T-cell (primary cell): ENCODE measurements at regions of chr10 and their contacts with region 1.

Region 1: DNA sequence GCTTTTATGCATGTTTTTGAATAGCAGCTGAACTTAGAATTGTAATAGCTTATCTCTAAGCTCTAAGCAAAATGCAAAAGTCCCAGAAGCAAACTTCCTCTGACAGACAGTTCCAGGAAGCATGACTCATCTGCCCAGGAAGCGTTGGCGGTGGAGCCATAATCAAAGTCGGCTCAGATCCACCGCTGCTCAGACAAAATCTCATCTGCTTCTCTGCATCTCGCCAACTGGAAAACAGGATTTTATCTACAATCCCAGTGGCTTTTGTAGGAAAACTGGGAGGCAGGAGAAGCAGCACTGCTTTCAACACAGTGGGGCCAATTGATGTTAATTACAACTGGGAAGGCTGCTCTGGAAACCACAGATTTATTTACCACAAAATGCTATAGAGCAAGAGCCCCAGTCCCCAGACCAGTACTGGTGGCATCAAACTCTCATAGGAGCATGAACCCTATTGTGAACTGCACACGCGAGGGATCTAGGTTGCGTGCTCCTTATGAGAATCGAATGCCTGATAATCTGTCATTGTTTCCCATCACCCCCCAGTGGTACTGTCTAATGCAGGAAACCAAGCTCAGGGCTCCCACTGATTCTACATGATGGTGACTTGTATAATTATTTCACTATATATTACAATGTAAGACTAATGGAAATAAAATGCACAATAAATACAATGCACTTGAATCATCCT is 99.9 kb downstream of the CUBN start:
- DNase-seq: peak; percentile 39 to 87 (median 61)
- ATAC-seq: peak; percentile 71 to 81 (median 74)
- H3K4me3 ChIP-seq: peak overlapping the region; percentile 46 to 54
- H3K4me3 Mint-ChIP-seq: peak overlapping the region; percentile 71 to 75 (median 73)
- H3K27ac ChIP-seq: peak overlapping the region; percentile 91
- H3K27ac Mint-ChIP-seq: peak overlapping the region; percentile 95 to 96
- H3K4me1 ChIP-seq: peaks cover 49 to 67% of the 10 kb centered on the region in 2 experiments
- H3K4me1 Mint-ChIP-seq: peaks cover 70 to 92% (median 89%) of the 10 kb centered on the region in 3 donors
- H3K27me3 ChIP-seq: no peaks in the 10 kb centered on the region
- H3K27me3 Mint-ChIP-seq: no peaks in the 10 kb centered on the region

Region 2: DNA sequence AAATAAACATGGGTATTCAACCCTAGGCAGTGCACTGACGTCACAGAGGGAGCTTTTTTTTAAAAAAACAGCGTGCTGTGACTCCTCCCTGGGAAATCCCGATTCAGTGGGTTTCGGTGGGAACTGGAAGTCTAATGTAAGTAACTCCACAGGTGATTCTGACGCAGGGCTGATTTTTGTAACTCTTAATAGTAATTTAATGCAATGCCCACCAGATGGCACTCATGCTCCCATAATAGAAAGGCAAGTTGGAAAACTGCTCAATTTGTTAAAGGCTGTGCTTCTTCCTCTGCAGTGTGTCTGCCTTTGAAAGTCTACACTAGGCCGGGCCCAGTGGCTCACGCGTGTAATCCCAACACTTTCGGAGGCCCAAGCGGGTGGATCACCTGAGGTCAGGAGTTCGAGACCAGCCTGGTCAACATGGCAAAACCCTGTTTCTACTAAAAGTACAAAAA is 201.6 kb before region 1 on chr10:
- CTCF ChIA-PET with region 1: no interaction called
- POLR2A ChIA-PET with region 1: no interaction called
- DNase-seq: peak; percentile 6 to 88 (median 51)
- ATAC-seq: peak; percentile 81 to 92 (median 92)
- H3K4me3 ChIP-seq: no peak overlapping the region
- H3K4me3 Mint-ChIP-seq: no peak overlapping the region
- H3K27ac ChIP-seq: no peak overlapping the region
- H3K27ac Mint-ChIP-seq: peak overlapping the region; percentile 66 to 77
- H3K4me1 ChIP-seq: peaks cover 0 to 6% of the 10 kb centered on the region in 2 experiments
- H3K4me1 Mint-ChIP-seq: peaks cover 0 to 7% (median 4%) of the 10 kb centered on the region in 3 donors
- H3K27me3 ChIP-seq: no peaks in the 10 kb centered on the region
- H3K27me3 Mint-ChIP-seq: no peaks in the 10 kb centered on the region

Region 3: DNA sequence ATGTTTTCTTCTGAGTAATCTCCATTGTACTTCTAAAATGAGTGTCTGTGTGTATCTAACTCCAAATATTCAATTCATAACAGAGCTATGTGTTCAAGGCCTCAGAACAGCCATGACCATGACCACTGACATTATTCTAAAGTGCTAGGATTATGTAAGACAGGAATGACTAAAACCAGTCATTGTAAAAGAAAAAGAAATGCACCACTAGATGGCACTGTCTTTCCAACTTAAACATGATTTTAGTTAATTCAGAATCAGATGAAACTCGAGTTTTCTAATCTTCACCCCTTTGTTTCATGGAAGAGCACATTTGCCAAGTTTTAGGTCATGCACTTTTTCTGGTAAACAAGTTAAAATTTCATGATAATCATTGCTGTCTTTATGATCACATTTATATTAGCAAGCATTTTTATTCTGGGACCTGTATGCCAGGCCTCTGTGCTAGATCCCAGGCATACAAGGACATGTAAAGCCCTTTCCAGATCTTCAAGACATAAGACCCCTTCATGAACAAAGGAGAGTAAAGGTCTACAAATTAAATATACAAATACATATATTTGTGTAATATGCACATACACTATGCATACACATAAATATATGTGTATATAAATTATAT is 186.4 kb before region 1 on chr10:
- CTCF ChIA-PET with region 1: interaction called in 1 of 2 experiments, 11 read pairs
- POLR2A ChIA-PET with region 1: no interaction called
- DNase-seq: peak in 2 of 35 experiments; percentile 16 to 75
- ATAC-seq: peak; percentile 52 to 66 (median 58)
- H3K4me3 ChIP-seq: no peak overlapping the region
- H3K4me3 Mint-ChIP-seq: no peak overlapping the region
- H3K27ac ChIP-seq: no peak overlapping the region
- H3K27ac Mint-ChIP-seq: no peak overlapping the region
- H3K4me1 ChIP-seq: no peaks in the 10 kb centered on the region
- H3K4me1 Mint-ChIP-seq: peaks cover 2 to 6% (median 4%) of the 10 kb centered on the region in 3 donors
- H3K27me3 ChIP-seq: no peaks in the 10 kb centered on the region
- H3K27me3 Mint-ChIP-seq: no peaks in the 10 kb centered on the region

Region 4: DNA sequence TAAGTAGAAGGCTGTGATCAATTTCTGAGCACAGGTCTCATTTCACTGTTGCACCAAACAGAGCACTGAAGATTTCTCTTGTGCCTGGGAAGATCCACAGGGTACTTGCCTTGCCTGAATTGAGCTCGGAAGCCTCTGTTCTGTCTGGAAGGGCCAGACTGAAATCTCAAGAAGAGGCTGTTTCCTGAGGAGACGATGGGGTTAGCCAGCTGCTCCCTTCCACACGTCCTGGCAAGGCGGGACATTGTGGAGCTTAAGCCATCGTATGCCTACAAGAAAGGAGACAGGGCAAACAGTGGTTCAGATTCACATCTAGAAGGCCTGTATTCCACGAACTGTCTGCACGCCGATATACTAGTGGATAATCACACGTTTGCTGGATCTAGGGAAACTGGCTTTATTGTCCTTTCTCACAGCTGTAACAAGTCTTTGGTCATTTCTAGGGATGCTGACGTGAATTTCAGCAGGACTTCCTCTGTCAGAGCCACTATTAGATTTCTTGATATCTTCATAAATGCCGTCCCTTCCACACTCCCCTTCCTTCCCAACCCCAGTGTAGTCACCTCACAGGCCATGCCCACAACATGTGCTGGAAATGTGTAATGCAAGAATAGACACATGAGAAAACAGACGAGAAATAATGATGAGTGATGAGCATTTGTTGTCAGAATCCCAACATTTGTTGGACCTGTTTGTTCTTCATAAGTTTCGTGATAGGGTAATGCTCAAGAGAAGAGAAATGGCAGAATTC is 75.3 kb before region 1 on chr10:
- CTCF ChIA-PET with region 1: no interaction called
- POLR2A ChIA-PET with region 1: no interaction called
- DNase-seq: no peak
- ATAC-seq: no peak
- H3K4me3 ChIP-seq: no peak overlapping the region
- H3K4me3 Mint-ChIP-seq: no peak overlapping the region
- H3K27ac ChIP-seq: no peak overlapping the region
- H3K27ac Mint-ChIP-seq: no peak overlapping the region
- H3K4me1 ChIP-seq: peaks cover 0 to 5% of the 10 kb centered on the region in 2 experiments
- H3K4me1 Mint-ChIP-seq: peaks cover 12 to 24% (median 12%) of the 10 kb centered on the region in 3 donors
- H3K27me3 ChIP-seq: no peaks in the 10 kb centered on the region
- H3K27me3 Mint-ChIP-seq: no peaks in the 10 kb centered on the region

Region 5: GRCh38 chr10:17001961-17002749 is 27.6 kb before region 1 on chr10:
- CTCF ChIA-PET with region 1: interaction called in 1 of 2 experiments, 3 read pairs
- POLR2A ChIA-PET with region 1: interaction called in 1 of 2 experiments, 10 read pairs
- DNase-seq: peak in 19 of 35 experiments; percentile 10 to 87 (median 29)
- ATAC-seq: peak in 2 of 4 experiments; percentile 5 to 59
- H3K4me3 ChIP-seq: no peak overlapping the region
- H3K4me3 Mint-ChIP-seq: peak overlapping the region; percentile 10 to 59 (median 14)
- H3K27ac ChIP-seq: peak overlapping the region; percentile 70
- H3K27ac Mint-ChIP-seq: peak overlapping the region; percentile 82 to 89
- H3K4me1 ChIP-seq: peaks cover 25 to 27% of the 10 kb centered on the region in 2 experiments
- H3K4me1 Mint-ChIP-seq: peaks cover 37 to 64% (median 57%) of the 10 kb centered on the region in 3 donors
- H3K27me3 ChIP-seq: no peaks in the 10 kb centered on the region
- H3K27me3 Mint-ChIP-seq: no peaks in the 10 kb centered on the region